ENCODE measurements at regions of chr1 and their contacts with region 1.

Region 1: GRCh38 chr1:110203021-110203661 is 7.0 kb upstream of the KCNC4 start:
- DNase-seq: peak; percentile 72
- H3K4me3 ChIP-seq: no peak overlapping the region; a peak in 1 of 4 replicates
- H3K27ac ChIP-seq: no peak overlapping the region
- H3K4me1 ChIP-seq: peaks cover 0 to 25% of the 10 kb centered on the region in 2 experiments; a peak in 1 of 4 replicates
- H3K27me3 ChIP-seq: no peaks in the 10 kb centered on the region
- CTCF ChIP-seq: peak; percentile 84
- EP300 ChIP-seq: no peak
- RAD21 ChIP-seq: peak; percentile 89

Region 2: GRCh38 chr1:109959974-109960744 is 243.0 kb before region 1 on chr1:
- CTCF ChIA-PET with region 1: no interaction called
- POLR2A ChIA-PET with region 1: no interaction called
- DNase-seq: no peak
- H3K4me3 ChIP-seq: no peak overlapping the region
- H3K27ac ChIP-seq: peak overlapping the region; percentile 66 to 85; a peak in 3 of 4 replicates
- H3K4me1 ChIP-seq: peaks cover 3 to 16% of the 10 kb centered on the region in 2 experiments; a peak in 2 of 4 replicates
- H3K27me3 ChIP-seq: no peaks in the 10 kb centered on the region
- CTCF ChIP-seq: peak; percentile 23; the same call in 1 of the 2 replicates
- EP300 ChIP-seq: no peak
- RAD21 ChIP-seq: no peak

Region 3: DNA sequence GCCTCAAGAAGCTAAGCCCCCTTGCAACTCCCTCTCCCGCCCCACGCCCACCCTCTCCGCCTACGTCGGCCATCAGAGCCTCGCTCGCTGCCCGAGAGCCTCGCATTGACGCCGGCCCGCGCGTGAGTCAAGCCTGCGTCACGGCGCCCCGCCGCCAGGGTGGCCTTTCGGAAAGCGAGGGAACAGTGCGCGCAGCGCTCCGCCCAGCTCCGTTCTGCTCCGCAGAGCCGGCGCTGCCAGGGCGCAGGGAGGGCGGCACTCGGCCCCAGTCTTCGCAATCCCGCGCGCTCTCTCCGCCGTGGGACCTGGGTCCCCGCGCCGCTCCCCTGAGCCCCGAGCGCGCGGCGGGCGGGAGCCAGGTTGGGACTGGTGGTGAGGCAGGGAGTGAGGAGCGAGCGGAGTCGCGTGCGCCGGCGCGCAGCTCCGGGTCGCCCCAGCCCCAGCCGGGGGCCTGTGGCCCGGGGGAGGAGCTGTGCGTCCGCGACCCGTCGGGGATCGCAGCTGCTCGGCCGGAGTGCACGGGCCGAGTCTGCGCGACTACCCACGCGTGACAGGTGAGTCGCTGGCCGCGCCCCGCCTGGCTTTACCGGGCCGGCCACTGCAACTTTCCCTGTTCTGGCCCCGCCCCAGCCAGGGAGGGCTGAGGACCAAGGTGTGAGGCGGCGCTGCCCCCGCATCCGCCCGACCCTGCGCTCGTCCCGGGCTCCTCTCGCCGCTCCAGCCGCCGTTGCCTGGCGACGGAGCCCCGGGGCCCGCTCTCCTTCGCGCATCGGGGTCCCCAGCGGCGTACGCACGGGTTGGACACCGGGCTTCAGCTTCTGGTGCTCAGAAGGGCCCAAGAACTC is 52.6 kb before region 1 on chr1 and contains the start of gene SLC6A17:
- CTCF ChIA-PET with region 1: interaction called, 11 read pairs
- POLR2A ChIA-PET with region 1: no interaction called
- DNase-seq: peak; percentile 82
- H3K4me3 ChIP-seq: peak within 1 kb of the TSS; percentile 44 to 63
- H3K27ac ChIP-seq: no peak within 1 kb of the TSS
- H3K4me1 ChIP-seq: peaks cover 0 to 9% of the 10 kb centered on the region in 2 experiments; a peak in 1 of 4 replicates
- H3K27me3 ChIP-seq: peaks cover 23% of the 10 kb centered on the region; the same call in 1 of the 2 replicates
- CTCF ChIP-seq: no peak
- EP300 ChIP-seq: no peak
- RAD21 ChIP-seq: no peak
- polyA plus RNA-seq, gene SLC6A17: 0.62 and 0.67 TPM in 2 replicates

Region 4: DNA sequence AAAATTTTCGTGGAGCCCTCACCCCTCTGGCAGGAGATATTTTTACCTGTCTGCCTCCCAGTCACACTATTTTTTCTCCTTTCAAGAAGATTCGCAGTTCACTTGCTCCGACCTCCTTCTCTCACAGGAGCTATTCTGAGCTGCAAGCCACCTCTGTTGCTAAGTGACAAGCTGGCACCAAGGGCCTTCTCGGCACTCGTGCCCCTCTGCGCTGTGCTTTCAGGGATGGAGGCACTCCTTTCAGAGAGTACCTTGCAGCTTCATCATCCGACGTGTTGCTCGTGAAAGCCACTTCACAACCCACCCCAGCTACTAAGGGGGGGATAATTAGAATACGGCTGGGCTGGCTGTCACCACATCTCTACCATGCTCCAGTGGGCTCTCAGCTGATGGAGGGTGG is 41.3 kb before region 1 on chr1:
- CTCF ChIA-PET with region 1: interaction called, 10 read pairs
- POLR2A ChIA-PET with region 1: no interaction called
- DNase-seq: no peak
- H3K4me3 ChIP-seq: no peak overlapping the region
- H3K27ac ChIP-seq: no peak overlapping the region
- H3K4me1 ChIP-seq: peaks cover 0 to 38% of the 10 kb centered on the region in 2 experiments; a peak in 2 of 4 replicates
- H3K27me3 ChIP-seq: no peaks in the 10 kb centered on the region; the same call in 1 of the 2 replicates
- CTCF ChIP-seq: no peak
- EP300 ChIP-seq: no peak
- RAD21 ChIP-seq: no peak

Region 5: GRCh38 chr1:110176299-110176956 is 26.7 kb before region 1 on chr1:
- CTCF ChIA-PET with region 1: interaction called, 11 read pairs
- POLR2A ChIA-PET with region 1: interaction called, 3 read pairs
- DNase-seq: peak; percentile 86
- H3K4me3 ChIP-seq: no peak overlapping the region
- H3K27ac ChIP-seq: peak overlapping the region in 1 of 2 experiments; percentile 92; a peak in 2 of 4 replicates
- H3K4me1 ChIP-seq: peaks cover 0 to 62% of the 10 kb centered on the region in 2 experiments; a peak in 2 of 4 replicates
- H3K27me3 ChIP-seq: no peaks in the 10 kb centered on the region
- CTCF ChIP-seq: no peak
- EP300 ChIP-seq: peak in 1 of 2 experiments; percentile 90; a peak in 2 of 4 replicates
- RAD21 ChIP-seq: no peak; the same call in 1 of the 2 replicates

Region 6: GRCh38 chr1:110292031-110292741 is 89.0 kb after region 1 on chr1:
- CTCF ChIA-PET with region 1: interaction called, 1,300 read pairs
- POLR2A ChIA-PET with region 1: no interaction called
- DNase-seq: no peak
- H3K4me3 ChIP-seq: no peak overlapping the region
- H3K27ac ChIP-seq: no peak overlapping the region
- H3K4me1 ChIP-seq: no peaks in the 10 kb centered on the region; a peak in 2 of 4 replicates
- H3K27me3 ChIP-seq: 0 out of 2 replicates have a peak, but pooled peaks cover 5% of the 10 kb centered on the region
- CTCF ChIP-seq: no peak
- EP300 ChIP-seq: no peak
- RAD21 ChIP-seq: no peak

Region 7: DNA sequence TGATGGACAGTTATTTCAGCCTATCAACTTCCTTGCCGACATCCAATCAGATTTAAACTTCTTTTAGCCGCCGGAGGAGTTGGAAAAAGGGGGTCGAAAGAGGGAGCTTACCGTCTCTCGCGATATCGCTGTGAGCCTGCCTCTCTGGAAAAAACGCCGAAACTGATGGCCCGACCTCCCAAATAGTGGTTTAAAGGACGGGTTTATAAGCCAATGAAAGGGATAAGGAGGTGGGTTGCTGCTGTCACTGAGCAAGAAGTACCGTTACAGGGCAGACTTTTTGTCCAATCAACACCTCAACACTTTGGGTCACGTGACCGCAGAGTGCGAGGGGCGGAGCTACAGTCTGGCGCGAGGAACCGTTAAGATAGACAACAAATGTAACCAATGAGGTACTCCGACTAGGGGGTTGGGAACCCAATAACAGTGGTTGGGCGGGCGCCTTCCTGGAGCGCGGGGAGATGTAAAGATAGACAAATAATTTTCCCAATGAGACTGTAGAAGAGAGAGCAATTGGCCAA is 135.8 kb after region 1 on chr1 and contains the start of gene RBM15:
- CTCF ChIA-PET with region 1: interaction called, 36 read pairs
- POLR2A ChIA-PET with region 1: interaction called, 3 read pairs
- DNase-seq: peak; percentile 94
- H3K4me3 ChIP-seq: peak within 1 kb of the TSS; percentile 94 to 99
- H3K27ac ChIP-seq: peak within 1 kb of the TSS; percentile 98 to 99
- H3K4me1 ChIP-seq: peaks cover 29 to 44% of the 10 kb centered on the region in 2 experiments
- H3K27me3 ChIP-seq: no peaks in the 10 kb centered on the region
- CTCF ChIP-seq: no peak
- EP300 ChIP-seq: no peak; a peak in 1 of 4 replicates
- RAD21 ChIP-seq: no peak
- polyA plus RNA-seq, gene RBM15: 3.8 and 4.7 TPM in 2 replicates

Region 8: DNA sequence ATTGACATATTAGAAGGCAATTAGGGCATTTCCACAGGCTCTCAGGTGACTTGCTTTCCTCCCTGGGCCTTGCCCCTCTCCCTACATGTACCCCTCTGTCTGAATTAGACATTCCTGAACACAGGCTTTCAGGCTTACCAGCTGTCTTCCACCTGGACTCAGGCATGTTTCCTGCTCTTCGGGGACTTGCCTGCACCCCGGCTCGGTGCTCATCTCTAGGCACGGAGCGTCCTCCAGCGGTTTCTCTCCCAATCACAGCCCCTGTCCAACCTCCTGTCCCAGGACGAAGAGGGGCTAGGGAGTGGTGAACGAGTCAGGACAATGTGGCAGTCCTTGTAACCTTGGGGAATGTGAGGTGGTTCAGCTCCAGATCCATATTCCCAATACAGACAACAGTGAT is 252.0 kb after region 1 on chr1:
- CTCF ChIA-PET with region 1: interaction called, 139 read pairs
- POLR2A ChIA-PET with region 1: no interaction called
- DNase-seq: no peak
- H3K4me3 ChIP-seq: no peak overlapping the region
- H3K27ac ChIP-seq: no peak overlapping the region
- H3K4me1 ChIP-seq: no peaks in the 10 kb centered on the region
- H3K27me3 ChIP-seq: peaks cover 33% of the 10 kb centered on the region
- CTCF ChIP-seq: no peak
- EP300 ChIP-seq: no peak
- RAD21 ChIP-seq: no peak

Measured in SK-N-SH (cell line).